Heart left ventricle (tissue), 16 donors: ENCODE measurements at regions of chr11 and their contacts with region 1.

Region 1: GRCh38 chr11:60831143-60831500 is 10.8 kb upstream of the CCDC86 start:
- DNase-seq: peak; percentile 74 to 89 (median 85)
- ATAC-seq: peak; percentile 86 to 93 (median 90)
- H3K4me3 ChIP-seq: no peak overlapping the region
- H3K27ac ChIP-seq: no peak overlapping the region
- H3K4me1 ChIP-seq: peaks cover 0 to 18% (median 1%) of the 10 kb centered on the region in 12 donors
- H3K27me3 ChIP-seq: no peaks in the 10 kb centered on the region
- CTCF ChIP-seq: peak; percentile 86 to 97 (median 95)
- POLR2A ChIP-seq: no peak

Region 2: DNA sequence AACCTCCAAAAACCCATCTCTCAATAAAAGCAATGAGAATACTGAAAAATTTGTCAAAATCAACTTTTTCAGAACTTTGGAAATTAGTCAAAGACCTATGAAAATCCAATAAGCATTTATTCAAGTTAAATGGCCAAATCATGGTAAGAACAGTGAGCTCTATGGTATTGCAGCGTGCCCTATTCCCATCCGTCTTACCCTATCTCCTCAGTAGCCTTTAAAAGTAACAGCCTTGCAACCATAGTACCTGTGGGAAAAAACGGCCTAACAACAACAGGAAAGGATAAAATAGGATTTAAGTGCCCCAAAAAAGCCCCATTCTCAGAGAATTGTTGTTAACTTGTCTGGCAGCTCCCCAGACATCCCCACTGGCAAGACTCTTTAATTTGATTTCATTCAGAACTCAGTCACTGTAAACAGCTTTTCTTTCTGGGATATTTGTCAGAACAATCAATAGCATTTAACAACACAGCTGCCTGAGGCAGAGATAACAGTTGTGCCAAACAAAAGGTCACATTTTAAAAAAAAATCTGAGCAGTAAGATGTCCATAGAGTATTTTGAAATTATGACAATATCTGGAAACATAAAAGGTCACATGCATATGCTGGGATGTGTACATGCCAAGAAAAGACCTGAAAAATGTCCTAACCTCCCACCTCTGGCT is 150.5 kb before region 1 on chr11:
- intact Hi-C with region 1: no loop called
- DNase-seq: no peak
- ATAC-seq: no peak
- H3K4me3 ChIP-seq: no peak overlapping the region
- H3K27ac ChIP-seq: no peak overlapping the region
- H3K4me1 ChIP-seq: no peaks in the 10 kb centered on the region
- H3K27me3 ChIP-seq: peaks cover 0 to 2% (median 0%) of the 10 kb centered on the region in 9 donors
- CTCF ChIP-seq: no peak
- POLR2A ChIP-seq: no peak

Region 3: GRCh38 chr11:60775420-60775961 is 55.6 kb before region 1 on chr11:
- intact Hi-C with region 1: loop called in 3 of 10 experiments (anchors 1 to 5 kb)
- DNase-seq: peak; percentile 73 to 85 (median 83)
- ATAC-seq: peak; percentile 79 to 86 (median 85)
- H3K4me3 ChIP-seq: no peak overlapping the region
- H3K27ac ChIP-seq: peak overlapping the region in 6 of 12 donors; percentile 17 to 59 (median 49)
- H3K4me1 ChIP-seq: peaks cover 0 to 22% (median 9%) of the 10 kb centered on the region in 12 donors
- H3K27me3 ChIP-seq: peaks cover 0 to 14% (median 0%) of the 10 kb centered on the region in 9 donors
- CTCF ChIP-seq: peak; percentile 79 to 97 (median 92)
- POLR2A ChIP-seq: no peak

Region 4: DNA sequence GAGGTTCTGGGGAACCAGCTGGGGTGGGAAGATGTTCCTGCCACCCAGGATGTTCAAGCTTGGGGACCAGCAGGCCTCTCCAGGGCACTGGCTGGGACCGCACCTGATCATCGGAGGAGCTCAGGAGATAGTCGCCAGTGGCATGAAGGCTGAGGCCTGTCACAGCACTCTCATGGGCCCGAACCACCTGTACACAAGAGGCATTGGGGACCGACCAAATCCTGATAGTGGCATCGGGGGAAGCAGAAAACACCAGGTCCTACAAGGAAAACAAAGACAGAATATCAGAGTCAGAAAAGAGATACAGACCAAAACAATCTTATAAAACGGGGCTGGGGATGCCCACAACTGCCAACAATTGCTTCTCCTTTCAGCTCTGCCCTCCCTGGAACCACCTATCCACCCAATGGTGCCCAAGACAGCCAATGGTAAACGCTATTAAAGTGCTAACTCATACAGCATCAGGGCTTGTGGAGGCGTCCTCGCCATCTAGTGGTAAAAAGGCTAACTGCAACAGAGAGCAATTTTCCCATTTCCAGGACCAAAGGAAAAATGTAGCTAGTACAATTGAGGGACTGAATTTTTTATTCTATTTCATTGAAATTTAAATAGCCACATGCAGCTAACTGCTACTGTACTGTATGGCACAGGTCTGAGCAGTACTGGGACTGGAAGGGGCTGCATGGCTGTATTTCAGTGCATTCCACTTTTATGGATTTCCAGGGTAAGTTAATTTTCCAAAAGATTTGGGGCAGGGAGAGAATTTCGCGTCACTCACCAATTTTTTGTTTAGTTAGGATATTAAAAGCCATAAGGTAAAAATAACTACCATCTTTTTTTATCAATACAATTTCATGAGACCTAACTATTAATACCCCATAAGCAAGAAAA is 68.2 kb after region 1 on chr11:
- intact Hi-C with region 1: loop called in 8 of 10 experiments (anchors 1 to 5 kb)
- DNase-seq: no peak
- ATAC-seq: peak in 3 of 4 donors; percentile 69 to 70 (median 70)
- H3K4me3 ChIP-seq: no peak overlapping the region
- H3K27ac ChIP-seq: no peak overlapping the region
- H3K4me1 ChIP-seq: peaks cover 0 to 15% (median 5%) of the 10 kb centered on the region in 12 donors
- H3K27me3 ChIP-seq: no peaks in the 10 kb centered on the region
- CTCF ChIP-seq: peak; percentile 90 to 98 (median 94)
- POLR2A ChIP-seq: no peak

Region 5: GRCh38 chr11:61129639-61130523 is 298.8 kb after region 1 on chr11:
- intact Hi-C with region 1: loop called in 9 of 10 experiments (anchors 2 to 10 kb)
- DNase-seq: peak; percentile 84 to 92 (median 85)
- ATAC-seq: peak; percentile 66 to 91 (median 88)
- H3K4me3 ChIP-seq: peak overlapping the region in 2 of 12 donors; percentile 9 to 23
- H3K27ac ChIP-seq: peak overlapping the region in 4 of 12 donors; percentile 13 to 61 (median 37)
- H3K4me1 ChIP-seq: peaks cover 0 to 22% (median 11%) of the 10 kb centered on the region in 12 donors
- H3K27me3 ChIP-seq: no peaks in the 10 kb centered on the region
- CTCF ChIP-seq: peak; percentile 94 to 100 (median 99)
- POLR2A ChIP-seq: no peak

Region 6: GRCh38 chr11:61187505-61188130 is 356.5 kb after region 1 on chr11:
- intact Hi-C with region 1: loop called in 8 of 10 experiments (anchors 2 to 10 kb)
- DNase-seq: peak; percentile 52 to 81 (median 66)
- ATAC-seq: peak in 3 of 4 donors; percentile 64 to 76 (median 72)
- H3K4me3 ChIP-seq: no peak overlapping the region
- H3K27ac ChIP-seq: no peak overlapping the region
- H3K4me1 ChIP-seq: no peaks in the 10 kb centered on the region
- H3K27me3 ChIP-seq: peaks cover 0 to 16% (median 0%) of the 10 kb centered on the region in 9 donors
- CTCF ChIP-seq: peak; percentile 76 to 97 (median 93)
- POLR2A ChIP-seq: no peak